ENCODE measurements at regions of chr7 and their contacts with region 1.

Region 1: GRCh38 chr7:100719523-100720319 is 547 bp upstream of the EPO start:
- DNase-seq: no peak
- ATAC-seq: peak; percentile 17
- H3K4me3 Mint-ChIP-seq: peak overlapping the region; percentile 65
- H3K27ac Mint-ChIP-seq: no peak overlapping the region
- H3K4me1 Mint-ChIP-seq: peaks cover 4% of the 10 kb centered on the region
- H3K27me3 Mint-ChIP-seq: peaks cover 62% of the 10 kb centered on the region
- CTCF ChIP-seq: no peak

Region 2: DNA sequence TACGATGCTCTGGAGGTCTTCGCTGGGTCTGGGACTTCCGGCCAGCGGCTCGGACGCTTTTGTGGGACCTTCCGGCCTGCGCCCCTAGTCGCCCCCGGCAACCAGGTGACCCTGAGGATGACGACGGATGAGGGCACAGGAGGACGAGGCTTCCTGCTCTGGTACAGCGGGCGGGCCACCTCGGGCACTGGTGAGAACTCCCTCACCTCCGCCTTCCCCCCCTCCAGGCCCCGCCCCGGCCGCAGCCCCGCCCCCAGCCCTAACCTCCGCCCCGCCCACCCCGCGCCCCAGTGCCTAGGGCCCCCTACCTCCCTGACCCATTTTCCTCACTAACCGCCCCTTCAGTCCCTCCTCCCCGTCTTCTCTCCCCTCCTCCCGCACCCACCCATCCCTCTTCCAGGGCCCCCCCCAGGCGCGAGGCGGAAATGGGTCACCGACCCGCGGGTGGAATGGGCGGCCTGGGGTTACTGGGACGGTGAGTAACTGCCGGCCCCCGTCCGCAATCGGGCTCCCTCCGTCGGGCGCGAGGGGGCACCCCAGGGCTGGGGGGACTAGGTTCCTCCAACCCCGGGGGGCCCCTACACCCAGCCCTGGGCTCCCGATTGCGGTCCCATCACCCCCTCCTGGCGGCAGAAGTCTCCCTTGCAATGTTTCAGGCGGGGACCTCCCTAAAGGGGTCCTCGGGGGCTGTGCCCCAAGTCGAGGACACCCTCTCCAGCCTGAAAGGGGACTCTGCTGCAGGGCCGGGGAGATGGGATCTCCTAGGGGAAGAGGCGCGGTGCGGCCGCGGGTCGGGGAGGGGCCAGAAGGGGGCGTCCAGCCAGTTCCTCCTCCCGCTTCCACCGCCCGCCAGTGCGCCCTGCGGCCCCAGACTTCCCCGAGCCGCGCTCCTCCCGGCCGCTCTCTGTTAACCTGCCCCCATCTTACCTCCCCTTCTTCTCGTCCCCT is 115.4 kb before region 1 on chr7:
- CTCF ChIA-PET with region 1: interaction called, 10 read pairs
- POLR2A ChIA-PET with region 1: no interaction called
- DNase-seq: peak; percentile 90
- ATAC-seq: peak; percentile 71
- H3K4me3 Mint-ChIP-seq: peak overlapping the region; percentile 87
- H3K27ac Mint-ChIP-seq: peak overlapping the region; percentile 96
- H3K4me1 Mint-ChIP-seq: peaks cover 43% of the 10 kb centered on the region
- H3K27me3 Mint-ChIP-seq: peaks cover 13% of the 10 kb centered on the region
- CTCF ChIP-seq: peak; percentile 48; the same call in 1 of the 2 replicates

Region 3: GRCh38 chr7:100632951-100633717 is 86.6 kb before region 1 on chr7:
- CTCF ChIA-PET with region 1: interaction called, 11 read pairs
- POLR2A ChIA-PET with region 1: no interaction called
- DNase-seq: peak; percentile 67
- ATAC-seq: peak; percentile 40
- H3K4me3 Mint-ChIP-seq: peak overlapping the region; percentile 76
- H3K27ac Mint-ChIP-seq: no peak overlapping the region
- H3K4me1 Mint-ChIP-seq: peaks cover 3% of the 10 kb centered on the region
- H3K27me3 Mint-ChIP-seq: peaks cover 41% of the 10 kb centered on the region
- CTCF ChIP-seq: no peak; the same call in 1 of the 2 replicates

Region 4: GRCh38 chr7:100736671-100737070 is 16.9 kb after region 1 on chr7:
- CTCF ChIA-PET with region 1: interaction called, 14 read pairs
- POLR2A ChIA-PET with region 1: no interaction called
- DNase-seq: no peak
- ATAC-seq: peak; percentile 52
- H3K4me3 Mint-ChIP-seq: no peak overlapping the region
- H3K27ac Mint-ChIP-seq: no peak overlapping the region
- H3K4me1 Mint-ChIP-seq: no peaks in the 10 kb centered on the region; the same call in 1 of the 2 replicates
- H3K27me3 Mint-ChIP-seq: peaks cover 6% of the 10 kb centered on the region
- CTCF ChIP-seq: no peak

Region 5: GRCh38 chr7:100763556-100764140 is 43.9 kb after region 1 on chr7:
- CTCF ChIA-PET with region 1: interaction called, 11 read pairs
- POLR2A ChIA-PET with region 1: no interaction called
- DNase-seq: no peak
- ATAC-seq: no peak
- H3K4me3 Mint-ChIP-seq: no peak overlapping the region
- H3K27ac Mint-ChIP-seq: no peak overlapping the region
- H3K4me1 Mint-ChIP-seq: 0 out of 2 replicates have a peak, but pooled peaks cover 2% of the 10 kb centered on the region
- H3K27me3 Mint-ChIP-seq: no peaks in the 10 kb centered on the region
- CTCF ChIP-seq: no peak

Region 6: DNA sequence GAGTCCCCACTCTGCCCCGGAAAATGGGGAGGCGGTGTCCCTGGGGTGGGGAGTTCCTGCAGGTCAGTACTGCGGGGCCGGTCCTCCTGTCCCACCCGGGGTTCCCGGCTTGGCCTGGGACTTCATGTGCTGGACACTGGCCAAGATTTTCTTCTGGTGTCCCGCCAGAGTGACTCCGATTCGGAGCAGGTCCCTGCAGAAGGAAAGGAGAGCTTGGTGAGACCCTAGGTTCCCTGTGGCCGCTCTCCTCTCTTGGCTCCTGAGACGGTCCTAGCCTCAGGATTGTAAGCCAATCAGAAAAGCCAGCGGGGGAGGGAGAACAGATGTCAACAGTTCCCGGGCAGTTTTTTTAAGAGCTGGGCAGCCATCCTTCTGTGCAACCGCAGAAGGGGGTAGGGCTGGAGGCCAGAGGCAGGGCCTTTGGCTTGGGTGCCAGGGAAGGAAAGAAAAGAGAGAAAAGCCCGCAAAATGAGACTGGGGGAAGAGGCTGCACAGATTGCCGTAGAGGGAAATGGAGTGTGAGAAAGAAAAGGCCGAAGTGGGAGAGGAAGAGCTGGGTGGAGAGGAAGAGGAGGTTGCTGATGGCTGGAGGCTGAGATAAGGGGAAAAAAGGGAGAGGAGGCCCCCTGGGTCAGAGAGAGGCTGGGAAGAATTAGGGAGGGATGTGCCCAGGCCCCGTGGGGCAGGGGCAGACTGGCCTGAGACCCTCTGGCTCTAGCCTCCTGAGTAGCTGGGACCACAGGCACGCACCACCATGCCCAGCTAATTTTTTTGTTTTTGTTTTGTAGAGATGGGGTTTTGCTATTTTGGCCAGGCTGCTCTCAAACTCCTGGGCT is 83.9 kb after region 1 on chr7:
- CTCF ChIA-PET with region 1: interaction called, 26 read pairs
- POLR2A ChIA-PET with region 1: no interaction called
- DNase-seq: peak; percentile 59
- ATAC-seq: peak; percentile 21
- H3K4me3 Mint-ChIP-seq: no peak overlapping the region
- H3K27ac Mint-ChIP-seq: peak overlapping the region; percentile 83
- H3K4me1 Mint-ChIP-seq: peaks cover 24% of the 10 kb centered on the region
- H3K27me3 Mint-ChIP-seq: no peaks in the 10 kb centered on the region
- CTCF ChIP-seq: no peak

Region 7: GRCh38 chr7:100818338-100818737 is 98.6 kb after region 1 on chr7:
- CTCF ChIA-PET with region 1: no interaction called
- POLR2A ChIA-PET with region 1: no interaction called
- DNase-seq: no peak
- ATAC-seq: no peak
- H3K4me3 Mint-ChIP-seq: no peak overlapping the region
- H3K27ac Mint-ChIP-seq: no peak overlapping the region
- H3K4me1 Mint-ChIP-seq: no peaks in the 10 kb centered on the region
- H3K27me3 Mint-ChIP-seq: no peaks in the 10 kb centered on the region
- CTCF ChIP-seq: no peak

Region 8: DNA sequence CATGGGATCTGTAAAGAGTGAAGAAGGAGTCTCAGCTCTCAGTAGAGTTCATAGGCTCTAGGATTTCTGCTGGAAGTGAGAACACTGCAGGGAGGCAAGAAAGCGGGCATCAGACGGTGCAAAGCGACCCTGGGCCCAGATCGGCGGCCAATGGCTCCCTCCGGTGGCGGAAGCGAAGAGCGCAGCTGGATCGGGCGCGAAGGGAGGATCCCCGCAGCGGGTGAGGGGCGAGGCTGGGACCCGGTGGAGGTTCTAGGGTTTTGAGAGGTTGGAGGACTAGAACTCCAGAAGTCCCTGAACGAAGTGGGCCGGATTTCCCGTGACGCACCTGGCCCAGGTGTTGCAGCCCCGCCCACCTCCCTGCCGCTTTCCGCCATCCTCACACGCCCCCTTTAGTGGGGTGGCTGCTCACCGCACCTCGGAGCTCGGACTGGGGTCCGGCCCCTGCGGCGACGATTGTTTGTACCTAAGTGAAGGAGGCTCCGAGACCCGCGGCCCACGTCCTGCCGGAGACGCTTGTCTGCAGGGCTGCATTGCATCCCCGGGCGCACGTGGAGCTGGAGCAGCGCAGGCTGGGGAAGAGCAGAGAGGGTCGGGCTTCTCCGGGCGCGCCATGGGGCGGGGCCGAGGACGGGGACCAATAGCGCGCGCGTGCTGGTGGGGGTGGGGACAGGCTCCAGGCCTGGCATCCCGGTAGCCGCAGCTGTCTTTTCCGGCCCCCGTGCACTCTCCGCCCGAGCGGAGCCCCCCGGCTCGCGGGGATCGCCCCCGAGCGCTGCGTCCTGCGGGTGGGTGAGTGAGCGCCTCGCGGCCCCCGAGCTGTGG is 132.5 kb after region 1 on chr7 and contains the start of gene SLC12A9:
- CTCF ChIA-PET with region 1: interaction called, 19 read pairs
- POLR2A ChIA-PET with region 1: interaction called, 3 read pairs
- DNase-seq: peak; percentile 93
- ATAC-seq: peak; percentile 95
- H3K4me3 Mint-ChIP-seq: peak within 1 kb of the TSS; percentile 93
- H3K27ac Mint-ChIP-seq: peak within 1 kb of the TSS; percentile 67
- H3K4me1 Mint-ChIP-seq: 0 out of 2 replicates have a peak, but pooled peaks cover 7% of the 10 kb centered on the region
- H3K27me3 Mint-ChIP-seq: no peaks in the 10 kb centered on the region
- CTCF ChIP-seq: peak; percentile 78
- total RNA-seq, gene SLC12A9: 32.6 to 39.3 TPM (median 34.1 TPM) in 3 replicates

Region 9: GRCh38 chr7:100942045-100942768 is 222.5 kb after region 1 on chr7:
- CTCF ChIA-PET with region 1: no interaction called
- POLR2A ChIA-PET with region 1: no interaction called
- DNase-seq: no peak
- ATAC-seq: no peak
- H3K4me3 Mint-ChIP-seq: no peak overlapping the region
- H3K27ac Mint-ChIP-seq: peak overlapping the region; percentile 76; the same call in 1 of the 2 replicates
- H3K4me1 Mint-ChIP-seq: peaks cover 38% of the 10 kb centered on the region
- H3K27me3 Mint-ChIP-seq: peaks cover 3% of the 10 kb centered on the region; the same call in 1 of the 2 replicates
- CTCF ChIP-seq: no peak

Measured in WTC11 (cell line).